ENCODE measurements at regions of chr5 and their contacts with region 1.

Region 1: GRCh38 chr5:88826646-88827585 is 56.1 kb downstream of the MEF2C start:
- DNase-seq: no peak
- ATAC-seq: peak; percentile 39 to 67 (median 54)
- H3K4me3 ChIP-seq: peak overlapping the region; percentile 51
- H3K27ac ChIP-seq: peak overlapping the region; percentile 87
- H3K4me1 ChIP-seq: peaks cover 100% of the 10 kb centered on the region
- H3K27me3 ChIP-seq: no peaks in the 10 kb centered on the region
- CTCF ChIP-seq: no peak

Region 2: DNA sequence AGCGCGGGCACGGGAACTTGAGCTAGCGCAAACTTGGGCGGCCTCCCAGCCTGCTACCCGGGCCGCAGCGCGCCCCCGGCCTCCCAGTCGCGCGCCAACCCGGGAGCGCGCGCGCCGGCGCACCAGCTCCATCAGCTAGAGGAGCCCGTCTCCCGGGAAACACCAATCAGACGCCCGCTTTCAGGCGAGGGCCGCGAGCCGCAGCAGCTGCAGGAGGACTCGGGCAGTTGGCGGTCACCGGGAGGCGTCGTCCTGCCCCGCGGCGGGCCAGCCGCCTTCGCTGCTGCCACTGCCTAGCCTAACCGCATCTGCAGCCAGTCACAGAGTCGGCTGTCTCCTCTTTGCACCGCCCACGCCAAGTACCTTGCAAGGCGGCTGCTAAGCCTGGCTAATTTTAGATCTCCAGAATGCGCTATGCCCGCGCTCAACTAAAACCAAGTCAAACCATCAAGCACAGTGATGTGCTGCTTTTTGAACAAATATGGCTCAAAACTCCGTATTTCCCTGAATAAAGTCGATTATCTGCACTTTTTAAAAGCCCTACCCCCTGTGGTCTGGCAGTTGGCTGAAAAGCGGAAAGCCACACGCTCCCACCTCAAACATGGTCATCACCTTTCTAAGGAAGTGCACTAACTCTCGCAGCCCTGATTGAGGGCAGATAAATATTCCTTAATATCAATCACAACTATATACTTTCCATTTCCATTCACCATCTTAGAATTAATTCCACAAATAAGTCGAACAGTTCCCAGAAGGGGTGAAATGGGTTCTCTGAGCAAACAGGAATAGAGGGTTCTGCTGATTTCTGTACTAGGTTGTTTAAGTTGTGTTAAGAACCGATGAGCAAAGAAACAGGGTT is 165.7 kb before region 1 on chr5:
- intact Hi-C with region 1: no loop called
- DNase-seq: peak; percentile 47 to 62
- ATAC-seq: peak; percentile 71 to 82 (median 76)
- H3K4me3 ChIP-seq: peak overlapping the region; percentile 56
- H3K27ac ChIP-seq: no peak overlapping the region
- H3K4me1 ChIP-seq: peaks cover 7% of the 10 kb centered on the region
- H3K27me3 ChIP-seq: peaks cover 16 to 95% (median 21%) of the 10 kb centered on the region in 3 donors
- CTCF ChIP-seq: no peak

Region 3: DNA sequence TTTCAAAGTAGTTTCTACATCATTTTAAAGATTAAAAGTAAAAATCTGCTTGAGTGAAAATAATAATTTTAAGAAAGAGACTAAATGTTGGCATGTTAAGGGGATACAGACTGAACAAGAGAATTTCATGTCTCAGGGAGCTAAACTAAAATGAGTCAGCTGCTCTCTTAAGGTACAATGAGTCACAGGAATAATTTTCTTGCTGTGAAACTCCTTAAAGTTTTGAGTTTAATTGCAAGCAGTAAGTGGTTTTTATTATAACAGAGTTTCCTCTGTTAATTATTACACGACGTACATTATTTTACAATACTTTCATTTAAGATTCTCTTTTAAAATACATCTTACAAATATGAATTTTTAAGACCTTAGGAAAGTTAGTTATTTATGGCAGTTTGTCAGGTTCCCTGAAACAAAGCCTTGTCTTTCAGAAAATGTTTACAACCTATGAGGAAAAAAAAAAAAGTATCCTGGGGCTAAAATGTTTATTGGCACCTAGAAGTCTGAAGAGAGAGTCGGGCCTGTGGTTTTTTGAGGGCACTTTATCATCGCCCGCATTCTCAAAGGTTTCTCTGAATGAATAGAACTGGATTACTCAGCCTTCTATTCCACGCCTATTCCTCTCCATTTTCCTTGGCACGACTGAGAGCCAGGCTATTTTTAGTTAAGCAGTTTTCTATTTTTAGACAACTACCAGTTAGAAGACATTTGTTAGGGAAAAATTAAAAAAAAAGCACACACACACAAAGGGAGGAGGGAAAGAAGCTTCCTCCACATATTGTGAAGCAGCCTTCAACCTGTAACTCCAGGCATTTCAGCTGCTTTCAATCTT is 41.3 kb before region 1 on chr5:
- intact Hi-C with region 1: loop called (anchors 2 to 5 kb)
- DNase-seq: no peak
- ATAC-seq: peak; percentile 88 to 93 (median 90)
- H3K4me3 ChIP-seq: peak overlapping the region; percentile 11
- H3K27ac ChIP-seq: peak overlapping the region; percentile 68
- H3K4me1 ChIP-seq: peaks cover 58% of the 10 kb centered on the region
- H3K27me3 ChIP-seq: no peaks in the 10 kb centered on the region
- CTCF ChIP-seq: no peak

Region 4: DNA sequence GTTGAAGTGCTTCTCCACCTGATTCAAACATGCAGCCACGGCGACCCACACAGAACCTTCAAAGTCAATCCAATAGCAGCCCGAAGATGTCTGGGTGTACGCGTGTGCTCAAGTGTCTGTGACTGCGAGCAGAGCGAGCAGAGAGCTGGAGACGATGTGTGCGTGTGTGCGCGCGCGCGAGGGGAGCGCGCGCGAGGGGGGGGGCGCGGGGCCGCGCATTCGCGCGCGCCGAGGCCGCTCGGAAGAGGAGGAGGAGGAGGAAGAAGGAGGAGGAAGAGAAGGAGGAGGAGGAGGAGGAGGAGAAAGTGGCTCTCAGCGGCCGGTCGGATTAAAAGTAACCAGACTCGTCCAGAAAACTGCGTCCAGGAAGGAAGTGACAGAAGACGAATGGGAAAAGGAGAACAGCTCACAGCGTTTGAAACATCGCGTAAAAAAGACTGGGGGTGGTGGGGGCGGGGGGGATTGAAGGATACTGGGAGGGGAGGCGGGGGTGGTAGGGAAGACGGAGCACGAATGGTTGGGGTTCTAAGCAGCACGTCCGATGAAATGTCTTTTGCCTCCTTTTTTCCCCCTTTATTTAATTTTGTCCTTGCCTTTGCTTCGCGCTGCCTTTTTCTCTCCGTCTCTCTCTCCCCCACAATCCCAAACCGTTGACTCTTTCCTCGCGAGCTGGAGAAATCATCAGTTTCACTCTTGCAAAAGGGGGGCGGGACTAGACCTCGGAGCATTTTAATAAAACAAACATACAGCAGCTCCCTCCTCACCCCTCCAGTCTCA is 56.3 kb after region 1 on chr5 and contains the start of gene MEF2C:
- intact Hi-C with region 1: loop called in 1 of 2 experiments (anchors 5 kb)
- DNase-seq: peak; percentile 74 to 88
- ATAC-seq: peak; percentile 80 to 86 (median 84)
- H3K4me3 ChIP-seq: peak within 1 kb of the TSS; percentile 76
- H3K27ac ChIP-seq: peak within 1 kb of the TSS; percentile 88
- H3K4me1 ChIP-seq: peaks cover 56% of the 10 kb centered on the region
- H3K27me3 ChIP-seq: no peaks in the 10 kb centered on the region
- CTCF ChIP-seq: no peak
- total RNA-seq, gene MEF2C: 148 to 530 (median 257) TPM

Region 5: GRCh38 chr5:90421136-90421535 is 1594.2 kb after region 1 on chr5:
- intact Hi-C with region 1: no loop called
- DNase-seq: no peak
- ATAC-seq: peak in 2 of 4 donors; percentile 27 to 40
- H3K4me3 ChIP-seq: no peak overlapping the region
- H3K27ac ChIP-seq: no peak overlapping the region
- H3K4me1 ChIP-seq: no peaks in the 10 kb centered on the region
- H3K27me3 ChIP-seq: peaks cover 0 to 1% (median 0%) of the 10 kb centered on the region in 3 donors
- CTCF ChIP-seq: no peak